GM12878 (cell line): ENCODE measurements at regions of chr11 and their contacts with region 1.

Region 1: GRCh38 chr11:45964911-45965389 is 42.5 kb downstream of the LARGE2 start:
- DNase-seq: peak; percentile 38
- ATAC-seq: peak; percentile 98
- H3K4me3 ChIP-seq: no peak overlapping the region
- H3K27ac ChIP-seq: no peak overlapping the region
- H3K4me1 ChIP-seq: no peaks in the 10 kb centered on the region
- H3K27me3 ChIP-seq: no peaks in the 10 kb centered on the region
- CTCF ChIP-seq: peak; percentile 85 to 97 (median 90)
- EP300 ChIP-seq: no peak
- POLR2A ChIP-seq: no peak
- RAD21 ChIP-seq: peak; percentile 81

Region 2: GRCh38 chr11:45846974-45847910 is 117.7 kb before region 1 on chr11 and contains the start of gene CRY2:
- CTCF ChIA-PET with region 1: interaction called, 28 read pairs
- POLR2A ChIA-PET with region 1: no interaction called
- RAD21 ChIA-PET with region 1: no interaction called
- SMC1A ChIA-PET with region 1: interaction called, 3 read pairs
- in situ Hi-C with region 1: no loop called
- intact Hi-C with region 1: no loop called
- DNase-seq: peak; percentile 90
- ATAC-seq: peak; percentile 93
- H3K4me3 ChIP-seq: peak within 1 kb of the TSS; percentile 78
- H3K27ac ChIP-seq: peak within 1 kb of the TSS; percentile 48
- H3K4me1 ChIP-seq: peaks cover 5% of the 10 kb centered on the region
- H3K27me3 ChIP-seq: no peaks in the 10 kb centered on the region
- CTCF ChIP-seq: no peak
- EP300 ChIP-seq: peak in 1 of 2 experiments; percentile 58; a peak in 2 of 4 replicates
- POLR2A ChIP-seq: peak; percentile 99
- RAD21 ChIP-seq: no peak
- polyA plus RNA-seq, gene CRY2: 1.2 to 1.4 TPM

Region 3: DNA sequence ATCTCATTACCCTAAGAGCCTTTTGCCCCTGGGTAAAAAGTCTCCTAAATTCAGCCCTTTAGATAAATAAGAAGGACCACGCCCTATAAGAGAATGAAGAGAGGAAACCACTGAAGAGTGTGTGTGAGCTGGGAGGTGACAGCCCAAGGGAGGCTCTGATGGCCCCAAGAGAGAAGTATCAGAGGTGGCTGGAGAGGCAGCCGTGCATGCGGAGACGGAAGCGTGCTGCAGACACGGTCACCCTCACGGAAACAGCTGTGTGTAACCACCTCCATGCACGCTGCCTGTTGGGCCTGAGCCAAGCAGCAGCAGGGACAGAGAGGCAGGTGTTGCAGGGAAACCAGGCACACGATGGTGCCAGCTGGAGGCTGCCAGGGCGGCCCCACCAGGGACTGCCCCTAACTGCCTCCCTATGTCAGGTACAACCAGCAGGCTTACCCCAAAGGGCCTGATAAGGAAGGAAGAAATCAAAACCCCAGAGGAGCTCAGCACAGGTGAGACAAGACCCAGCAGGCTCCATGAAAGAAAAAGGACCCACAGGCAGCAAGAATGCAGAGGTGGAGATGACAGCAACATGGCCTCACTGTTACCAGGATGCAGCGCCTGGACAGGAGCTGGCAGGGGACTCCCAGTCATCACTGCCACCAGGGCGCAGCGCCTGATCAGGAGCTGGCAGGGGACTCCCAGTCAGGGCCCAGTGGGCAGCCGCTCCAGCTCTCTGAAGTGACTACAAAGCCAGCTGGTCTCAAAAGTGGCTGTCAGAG is 34.7 kb before region 1 on chr11:
- CTCF ChIA-PET with region 1: interaction called, 21 read pairs
- POLR2A ChIA-PET with region 1: no interaction called
- RAD21 ChIA-PET with region 1: interaction called, 18 read pairs
- SMC1A ChIA-PET with region 1: interaction called, 18 read pairs
- in situ Hi-C with region 1: no loop called
- intact Hi-C with region 1: no loop called
- DNase-seq: peak; percentile 88
- ATAC-seq: peak; percentile 89
- H3K4me3 ChIP-seq: no peak overlapping the region
- H3K27ac ChIP-seq: peak overlapping the region; percentile 35
- H3K4me1 ChIP-seq: peaks cover 49% of the 10 kb centered on the region
- H3K27me3 ChIP-seq: no peaks in the 10 kb centered on the region; a peak in 1 of 4 replicates
- CTCF ChIP-seq: no peak; a peak in 1 of 6 replicates
- EP300 ChIP-seq: peak; percentile 63 to 81
- POLR2A ChIP-seq: peak; percentile 29; the same call in 1 of the 2 replicates
- RAD21 ChIP-seq: no peak

Region 4: DNA sequence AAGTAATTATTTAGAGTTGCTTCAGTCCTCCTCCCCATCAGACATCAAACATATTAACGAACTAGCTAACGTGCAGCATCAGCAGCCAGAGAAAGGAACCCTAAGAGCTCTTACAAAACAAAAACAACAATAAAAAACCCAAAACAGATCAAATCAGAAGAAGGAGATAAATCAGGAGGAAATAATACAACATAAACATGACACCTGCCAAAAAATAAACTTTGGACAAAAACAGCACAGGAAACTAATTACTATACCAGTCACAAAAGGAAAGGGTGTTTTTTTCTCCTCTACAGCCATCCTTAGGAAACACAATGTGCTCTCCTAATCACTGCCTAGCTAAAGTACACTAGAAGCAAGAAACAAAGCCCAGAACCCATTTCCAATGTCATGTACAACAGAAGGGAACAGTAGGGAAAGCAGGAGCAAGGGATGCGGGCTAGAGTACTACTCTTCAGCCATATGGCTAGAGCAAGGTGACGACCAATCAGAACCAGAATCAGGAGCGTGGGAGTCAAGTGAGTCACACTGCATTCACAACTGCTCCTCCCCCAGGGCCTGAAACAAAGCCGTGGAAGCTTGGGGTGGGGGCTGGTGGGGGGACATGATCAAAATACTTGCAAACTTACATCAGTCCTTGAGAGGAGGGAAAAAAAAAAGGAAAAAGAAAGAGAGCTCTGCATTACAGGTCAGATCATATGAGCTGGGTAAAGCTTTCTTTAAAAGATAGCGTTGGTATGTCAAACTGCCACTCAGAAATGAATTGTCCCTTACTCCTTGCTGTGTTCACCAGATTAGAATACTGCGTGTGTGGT is 17.9 kb after region 1 on chr11:
- CTCF ChIA-PET with region 1: interaction called, 53 read pairs
- POLR2A ChIA-PET with region 1: interaction called, 3 read pairs
- RAD21 ChIA-PET with region 1: interaction called, 7 read pairs
- SMC1A ChIA-PET with region 1: interaction called, 11 read pairs
- in situ Hi-C with region 1: no loop called
- intact Hi-C with region 1: no loop called
- DNase-seq: no peak
- ATAC-seq: no peak
- H3K4me3 ChIP-seq: no peak overlapping the region
- H3K27ac ChIP-seq: no peak overlapping the region
- H3K4me1 ChIP-seq: no peaks in the 10 kb centered on the region
- H3K27me3 ChIP-seq: no peaks in the 10 kb centered on the region
- CTCF ChIP-seq: no peak
- EP300 ChIP-seq: no peak
- POLR2A ChIP-seq: no peak
- RAD21 ChIP-seq: no peak

Region 5: DNA sequence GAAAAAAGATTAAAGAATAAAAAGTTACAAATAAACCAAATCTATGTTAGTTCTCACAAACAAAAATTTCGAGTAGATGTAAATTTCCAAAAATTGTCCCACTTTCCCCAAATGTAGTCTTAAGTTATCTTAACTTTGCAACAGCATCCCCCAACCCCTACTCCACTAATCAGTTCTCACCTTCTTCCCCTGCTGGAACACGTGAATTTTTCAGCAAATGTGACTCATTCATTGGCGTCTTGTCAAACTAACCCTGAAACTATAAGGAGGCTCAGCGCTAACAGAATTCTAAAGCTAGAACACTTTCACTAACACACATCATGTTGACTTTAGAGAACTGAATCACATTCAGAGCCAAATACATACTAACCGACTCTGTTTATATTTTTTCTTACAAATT is 110.2 kb after region 1 on chr11:
- CTCF ChIA-PET with region 1: interaction called, 14 read pairs
- POLR2A ChIA-PET with region 1: no interaction called
- RAD21 ChIA-PET with region 1: no interaction called
- SMC1A ChIA-PET with region 1: no interaction called
- in situ Hi-C with region 1: no loop called
- intact Hi-C with region 1: no loop called
- DNase-seq: no peak
- ATAC-seq: no peak
- H3K4me3 ChIP-seq: no peak overlapping the region
- H3K27ac ChIP-seq: no peak overlapping the region
- H3K4me1 ChIP-seq: no peaks in the 10 kb centered on the region
- H3K27me3 ChIP-seq: no peaks in the 10 kb centered on the region
- CTCF ChIP-seq: no peak
- EP300 ChIP-seq: no peak
- POLR2A ChIP-seq: no peak
- RAD21 ChIP-seq: no peak

Region 6: DNA sequence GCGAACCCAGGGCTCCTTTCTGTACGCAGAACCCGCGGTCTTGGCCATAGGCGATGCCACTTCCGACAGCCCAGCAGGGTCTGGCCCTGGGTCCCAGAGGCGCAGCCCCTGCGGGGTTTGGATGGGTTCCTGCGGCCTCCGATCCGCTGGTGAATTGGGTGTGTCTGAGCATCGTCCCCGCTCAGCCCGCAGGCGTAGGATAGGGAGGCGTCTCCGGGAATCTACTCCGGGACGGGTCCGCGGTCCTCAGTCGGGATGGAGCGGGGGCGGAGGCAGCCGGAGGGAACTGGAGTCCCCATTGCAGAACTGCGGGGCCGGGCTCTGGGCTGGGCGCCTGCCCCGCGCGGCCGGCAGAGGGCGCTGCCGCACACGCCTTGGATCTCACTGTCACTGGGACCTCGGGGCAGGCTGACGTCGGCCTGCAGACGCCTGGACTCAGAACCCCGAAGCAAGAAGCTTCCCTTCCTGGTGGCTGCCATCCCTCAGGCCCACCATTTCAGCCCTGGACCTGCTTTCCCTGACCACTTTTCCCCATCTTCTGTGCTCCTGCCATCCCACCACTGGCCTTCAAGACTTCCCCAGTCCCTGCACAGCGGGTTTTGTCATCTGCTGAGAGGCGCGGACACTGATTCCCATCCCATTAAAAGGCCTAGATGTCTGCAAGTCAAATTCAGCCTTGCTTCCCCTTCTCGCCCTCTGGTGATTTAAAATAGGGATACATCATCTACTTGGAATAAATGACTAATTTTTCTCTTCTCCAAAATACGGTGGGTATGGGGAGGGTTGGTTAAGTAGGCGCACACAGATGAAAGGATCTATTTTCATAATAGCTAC is 274.2 kb after region 1 on chr11:
- CTCF ChIA-PET with region 1: interaction called, 14 read pairs
- POLR2A ChIA-PET with region 1: no interaction called
- RAD21 ChIA-PET with region 1: interaction called, 5 read pairs
- SMC1A ChIA-PET with region 1: interaction called, 8 read pairs
- in situ Hi-C with region 1: no loop called
- intact Hi-C with region 1: loop called (anchors 10 kb)
- DNase-seq: no peak
- ATAC-seq: peak; percentile 93
- H3K4me3 ChIP-seq: peak overlapping the region; percentile 39; the same call in 1 of the 2 replicates
- H3K27ac ChIP-seq: no peak overlapping the region
- H3K4me1 ChIP-seq: peaks cover 12% of the 10 kb centered on the region
- H3K27me3 ChIP-seq: peaks cover 0 to 5% of the 10 kb centered on the region in 2 experiments; a peak in 1 of 4 replicates
- CTCF ChIP-seq: peak; percentile 95 to 96 (median 95)
- EP300 ChIP-seq: no peak
- POLR2A ChIP-seq: no peak
- RAD21 ChIP-seq: peak; percentile 86